ENCODE measurements at regions of chr15 and their contacts with region 1.

Region 1: DNA sequence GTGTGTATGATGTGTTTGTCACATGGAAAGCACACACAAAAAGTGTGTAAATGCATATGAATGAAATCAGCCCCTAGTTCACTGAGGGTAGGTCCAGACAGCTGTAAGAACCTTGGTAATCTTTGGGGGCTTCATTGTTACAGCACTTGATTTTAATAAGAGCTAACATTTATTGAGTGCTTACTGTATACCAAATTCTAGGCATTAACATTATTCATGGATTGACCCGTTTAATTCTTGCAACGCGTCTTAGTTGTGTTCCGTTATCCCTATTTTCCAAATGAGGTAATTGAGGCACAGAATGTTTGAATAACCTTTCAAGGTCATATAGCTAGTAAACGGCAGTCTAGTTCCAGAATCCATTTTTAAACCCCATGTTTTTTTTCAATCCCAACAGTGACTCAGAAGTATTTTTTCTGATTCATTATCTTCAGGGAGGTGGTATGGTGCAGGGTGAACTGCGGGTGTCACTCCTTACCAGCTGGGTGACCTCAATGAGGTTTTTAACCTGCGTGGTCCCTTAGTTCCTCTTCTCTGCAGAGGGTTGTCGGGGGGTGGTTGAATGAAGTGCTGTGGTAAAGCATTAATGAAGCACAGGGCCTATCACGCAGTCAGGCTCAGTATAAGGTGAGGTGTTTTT is 14.2 kb downstream of the RAB8B start:
- DNase-seq: peak in 1 of 7 donors; percentile 18
- H3K4me3 ChIP-seq: no peak overlapping the region
- H3K27ac ChIP-seq: no peak overlapping the region
- H3K4me1 ChIP-seq: peaks cover 6 to 46% of the 10 kb centered on the region in 2 donors
- H3K27me3 ChIP-seq: no peaks in the 10 kb centered on the region
- CTCF ChIP-seq: no peak
- POLR2A ChIP-seq: no peak

Region 2: GRCh38 chr15:62413153-62413552 is 790.4 kb before region 1 on chr15:
- intact Hi-C with region 1: no loop called
- DNase-seq: no peak
- H3K4me3 ChIP-seq: no peak overlapping the region
- H3K27ac ChIP-seq: no peak overlapping the region
- H3K4me1 ChIP-seq: peaks cover 0 to 18% of the 10 kb centered on the region in 2 donors
- H3K27me3 ChIP-seq: no peaks in the 10 kb centered on the region
- CTCF ChIP-seq: no peak
- POLR2A ChIP-seq: no peak

Region 3: DNA sequence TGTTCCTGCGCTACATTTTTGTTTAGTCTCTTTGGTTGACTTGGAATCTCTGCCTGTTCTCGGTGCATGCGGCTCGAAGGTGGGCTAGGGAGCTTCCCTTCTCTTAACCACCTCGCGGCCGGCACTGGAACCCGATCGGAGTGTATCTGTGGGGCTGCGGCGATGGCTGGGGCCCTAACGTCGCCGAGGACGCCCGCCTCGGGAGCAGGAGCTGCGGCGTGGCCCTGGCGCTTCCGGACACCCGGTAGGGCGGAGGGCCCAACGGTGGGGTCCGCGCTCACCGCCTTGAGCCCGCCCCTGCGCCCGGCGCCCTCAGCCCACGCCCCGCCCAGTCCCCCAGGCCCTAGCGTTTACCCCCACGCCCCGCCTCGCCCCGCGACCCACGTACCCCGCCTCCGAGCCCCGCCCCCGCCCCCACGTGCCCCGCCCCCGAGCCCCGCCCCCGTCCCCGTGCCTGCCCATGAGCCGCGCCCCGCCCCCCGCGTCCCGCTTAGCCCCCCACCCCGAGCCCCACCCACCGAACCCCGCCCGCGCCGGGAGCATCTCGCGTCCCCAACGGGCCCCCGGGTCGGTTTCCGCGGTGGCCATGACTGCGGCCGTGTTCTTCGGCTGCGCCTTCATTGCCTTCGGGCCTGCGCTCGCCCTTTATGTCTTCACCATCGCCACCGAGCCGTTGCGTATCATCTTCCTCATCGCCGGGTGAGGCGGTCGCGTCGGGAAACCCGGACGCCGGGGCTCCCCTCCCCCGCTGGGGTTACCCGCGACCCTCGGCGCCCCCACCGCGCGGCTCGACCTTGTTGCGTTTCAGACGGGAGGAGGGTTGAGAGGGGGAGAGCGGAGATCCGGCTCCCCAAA is 73.7 kb after region 1 on chr15 and contains the start of gene APH1B:
- intact Hi-C with region 1: loop called in 1 of 2 experiments (anchors 10 kb)
- DNase-seq: peak; percentile 85 to 89 (median 87)
- H3K4me3 ChIP-seq: peak within 1 kb of the TSS in 3 of 4 donors; percentile 77 to 89 (median 84)
- H3K27ac ChIP-seq: peak within 1 kb of the TSS; percentile 64 to 93 (median 82)
- H3K4me1 ChIP-seq: peaks cover 5 to 14% of the 10 kb centered on the region in 2 donors
- H3K27me3 ChIP-seq: no peaks in the 10 kb centered on the region
- CTCF ChIP-seq: peak in 2 of 6 experiments; percentile 21 to 28
- POLR2A ChIP-seq: peak; percentile 69 to 77
- total RNA-seq, gene APH1B: 20.7 to 50.3 (median 33.4) TPM

Measured in adrenal gland (tissue), 19 donors.